ENCODE measurements at regions of chr6 and their contacts with region 1.

Region 1: GRCh38 chr6:56843573-56844349 is 111.1 kb upstream of the BEND6 start:
- DNase-seq: peak; percentile 68
- H3K4me3 ChIP-seq: peak overlapping the region; percentile 39 to 71 (median 62)
- H3K27ac ChIP-seq: peak overlapping the region; percentile 82 to 94 (median 87)
- H3K4me1 ChIP-seq: peaks cover 0 to 26% (median 12%) of the 10 kb centered on the region in 4 donors
- H3K27me3 ChIP-seq: peaks cover 42% of the 10 kb centered on the region
- CTCF ChIP-seq: peak in 4 of 5 experiments; percentile 40 to 58 (median 50)
- EP300 ChIP-seq: no peak
- POLR2A ChIP-seq: peak; percentile 32

Region 2: GRCh38 chr6:55220954-55221353 is 1622.8 kb before region 1 on chr6:
- in situ Hi-C with region 1: no loop called
- intact Hi-C with region 1: no loop called
- DNase-seq: no peak
- H3K4me3 ChIP-seq: no peak overlapping the region
- H3K27ac ChIP-seq: no peak overlapping the region
- H3K4me1 ChIP-seq: no peaks in the 10 kb centered on the region
- H3K27me3 ChIP-seq: no peaks in the 10 kb centered on the region
- CTCF ChIP-seq: no peak
- EP300 ChIP-seq: no peak
- POLR2A ChIP-seq: no peak

Region 3: GRCh38 chr6:55833284-55833683 is 1010.5 kb before region 1 on chr6:
- in situ Hi-C with region 1: no loop called
- intact Hi-C with region 1: loop called (anchors 5 kb)
- DNase-seq: no peak
- H3K4me3 ChIP-seq: no peak overlapping the region
- H3K27ac ChIP-seq: no peak overlapping the region
- H3K4me1 ChIP-seq: no peaks in the 10 kb centered on the region
- H3K27me3 ChIP-seq: no peaks in the 10 kb centered on the region
- CTCF ChIP-seq: no peak
- EP300 ChIP-seq: no peak
- POLR2A ChIP-seq: no peak

Region 4: GRCh38 chr6:56637640-56638039 is 206.1 kb before region 1 on chr6:
- in situ Hi-C with region 1: loop called in 1 of 4 experiments (anchors 10 kb)
- intact Hi-C with region 1: no loop called
- DNase-seq: no peak
- H3K4me3 ChIP-seq: no peak overlapping the region
- H3K27ac ChIP-seq: peak overlapping the region in 2 of 4 donors; percentile 8 to 48
- H3K4me1 ChIP-seq: peaks cover 0 to 5% (median under 1%) of the 10 kb centered on the region in 4 donors
- H3K27me3 ChIP-seq: no peaks in the 10 kb centered on the region
- CTCF ChIP-seq: peak; percentile 58 to 75 (median 64)
- EP300 ChIP-seq: no peak
- POLR2A ChIP-seq: no peak

Region 5: DNA sequence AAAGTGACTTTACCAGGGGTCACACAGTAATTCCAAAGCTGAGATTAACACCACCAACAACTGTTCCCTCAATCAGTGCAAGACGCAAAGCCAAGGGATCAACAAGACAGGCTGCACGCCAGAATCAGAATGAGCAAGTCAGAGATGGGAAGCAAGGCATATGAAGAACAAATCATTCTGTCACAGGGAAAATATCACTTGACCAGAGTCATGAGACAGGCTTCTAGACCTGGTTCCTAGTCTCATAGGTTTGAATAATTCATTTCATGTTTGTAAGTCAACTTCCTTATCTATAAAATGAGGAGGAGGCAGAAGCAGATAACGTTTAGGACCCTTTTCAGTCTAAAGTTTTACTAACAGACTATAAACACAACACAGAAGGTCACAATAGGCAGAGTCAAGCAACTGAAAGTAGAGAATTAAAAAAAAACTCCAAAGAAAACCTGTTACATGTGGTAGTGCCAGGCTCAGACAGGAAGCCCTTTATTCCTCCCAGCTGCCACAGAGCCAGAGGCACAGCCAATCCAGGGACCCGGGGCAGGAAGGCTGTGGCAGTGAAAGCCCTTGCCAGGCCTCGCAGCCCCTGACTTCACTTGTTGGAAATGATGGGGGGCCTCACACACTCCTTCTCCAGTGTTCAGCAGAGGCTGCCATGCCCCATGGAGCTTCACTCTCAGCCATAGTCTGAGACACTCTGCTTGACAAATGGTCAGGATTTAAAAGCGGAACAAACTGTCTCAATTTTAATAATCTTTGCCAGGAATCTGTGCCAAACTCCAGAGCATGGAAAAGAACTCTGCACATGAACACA is 171.9 kb before region 1 on chr6:
- in situ Hi-C with region 1: no loop called
- intact Hi-C with region 1: no loop called
- DNase-seq: peak; percentile 38
- H3K4me3 ChIP-seq: peak overlapping the region in 1 of 4 donors; percentile 10
- H3K27ac ChIP-seq: peak overlapping the region; percentile 80 to 85 (median 84)
- H3K4me1 ChIP-seq: peaks cover 13 to 40% (median 24%) of the 10 kb centered on the region in 4 donors
- H3K27me3 ChIP-seq: no peaks in the 10 kb centered on the region
- CTCF ChIP-seq: no peak
- EP300 ChIP-seq: no peak
- POLR2A ChIP-seq: no peak

Region 6: GRCh38 chr6:56708810-56709597 is 134.8 kb before region 1 on chr6:
- in situ Hi-C with region 1: loop called in 1 of 4 experiments (anchors 25 kb)
- intact Hi-C with region 1: no loop called
- DNase-seq: no peak
- H3K4me3 ChIP-seq: no peak overlapping the region
- H3K27ac ChIP-seq: peak overlapping the region; percentile 10 to 47 (median 26)
- H3K4me1 ChIP-seq: peaks cover 0 to 40% (median 7%) of the 10 kb centered on the region in 4 donors
- H3K27me3 ChIP-seq: no peaks in the 10 kb centered on the region
- CTCF ChIP-seq: peak; percentile 65 to 71 (median 66)
- EP300 ChIP-seq: no peak
- POLR2A ChIP-seq: no peak

Region 7: DNA sequence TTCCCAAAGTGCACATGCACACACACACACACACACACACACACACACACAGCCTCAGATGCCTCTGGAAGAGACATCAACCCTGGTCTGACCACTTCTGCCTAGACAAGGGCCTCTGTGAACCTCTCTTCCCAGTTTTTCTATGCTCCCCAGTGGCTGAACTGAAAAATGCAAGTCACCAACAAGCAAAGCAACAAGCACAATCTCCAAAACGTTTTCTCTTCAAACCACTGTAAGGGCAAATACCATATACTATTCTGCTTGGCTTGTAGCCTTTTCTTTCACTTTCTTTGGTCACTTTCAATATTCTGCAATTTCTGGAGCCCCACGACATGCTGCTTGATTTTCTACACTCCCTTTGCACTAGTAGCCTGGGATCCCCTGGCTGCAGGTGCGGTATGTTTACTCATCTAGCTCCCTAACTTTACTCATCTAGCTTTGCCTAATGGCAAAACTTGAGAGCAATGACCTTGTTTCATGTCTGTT is 79.6 kb before region 1 on chr6:
- in situ Hi-C with region 1: no loop called
- intact Hi-C with region 1: loop called (anchors 10 kb)
- DNase-seq: no peak
- H3K4me3 ChIP-seq: no peak overlapping the region
- H3K27ac ChIP-seq: peak overlapping the region in 3 of 4 donors; percentile 26 to 44 (median 42)
- H3K4me1 ChIP-seq: peaks cover 0 to 43% (median 10%) of the 10 kb centered on the region in 4 donors
- H3K27me3 ChIP-seq: no peaks in the 10 kb centered on the region
- CTCF ChIP-seq: peak in 4 of 5 experiments; percentile 27 to 49 (median 32)
- EP300 ChIP-seq: no peak
- POLR2A ChIP-seq: no peak

Region 8: DNA sequence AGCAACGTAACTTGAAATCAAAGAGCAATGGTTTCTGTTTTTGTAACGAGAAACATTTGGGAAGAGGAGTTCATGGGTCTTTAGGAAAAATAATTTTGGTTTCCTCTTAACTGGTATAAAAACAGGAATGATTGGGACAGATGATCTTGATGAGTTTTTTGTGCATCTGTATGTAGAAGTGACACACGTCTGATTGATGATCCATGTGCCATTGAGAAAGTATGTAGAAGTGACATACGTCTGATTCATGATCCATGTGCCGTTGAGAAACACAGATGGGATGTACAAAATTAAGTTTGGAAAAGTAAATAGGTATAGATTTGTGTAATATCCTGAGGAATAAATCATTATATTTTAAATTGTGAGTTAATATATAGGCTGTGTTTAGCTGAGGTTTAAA is 204.8 kb after region 1 on chr6:
- in situ Hi-C with region 1: no loop called
- intact Hi-C with region 1: no loop called
- DNase-seq: no peak
- H3K4me3 ChIP-seq: no peak overlapping the region
- H3K27ac ChIP-seq: no peak overlapping the region
- H3K4me1 ChIP-seq: peaks cover 0 to 21% (median 7%) of the 10 kb centered on the region in 4 donors
- H3K27me3 ChIP-seq: peaks cover 3% of the 10 kb centered on the region
- CTCF ChIP-seq: no peak
- EP300 ChIP-seq: no peak
- POLR2A ChIP-seq: no peak

Measured in transverse colon (tissue), 4 donors.